ENCODE measurements at regions of chr15 and their contacts with region 1.

Region 1: DNA sequence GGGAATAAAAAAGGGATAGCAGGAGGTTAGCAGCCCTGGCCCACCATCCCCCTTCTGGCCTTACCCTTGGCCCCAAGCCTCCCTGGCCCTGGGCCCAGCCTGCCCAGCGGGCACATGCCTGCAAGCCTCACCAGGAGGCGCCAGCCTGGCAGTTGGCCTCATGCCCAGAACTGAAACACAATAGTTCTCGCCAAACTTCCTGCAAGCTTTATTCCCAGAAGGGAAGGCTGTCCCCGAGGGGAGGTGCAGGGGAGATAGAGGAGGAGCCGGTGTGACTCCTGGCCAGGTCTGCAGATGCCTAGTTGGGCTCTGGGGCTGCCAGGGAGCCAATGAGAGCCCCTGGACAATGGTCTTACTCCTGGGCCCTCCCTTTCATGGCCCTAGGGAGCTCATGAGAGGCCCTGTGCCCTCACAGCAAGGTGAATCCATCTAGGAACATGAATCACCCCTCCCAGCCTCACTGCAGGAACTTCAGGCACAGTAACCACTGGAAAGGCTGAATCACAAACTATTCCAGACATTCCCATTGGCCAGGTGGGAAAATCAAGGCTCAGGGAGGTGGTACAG is 4.0 kb downstream of the CCDC33 start:
- DNase-seq: no peak
- H3K4me3 ChIP-seq: no peak overlapping the region
- H3K27ac ChIP-seq: no peak overlapping the region
- H3K4me1 ChIP-seq: peaks cover 0 to 26% (median 16%) of the 10 kb centered on the region in 4 experiments; a peak in 6 of 7 replicates
- H3K27me3 ChIP-seq: peaks cover 0 to 9% (median 2%) of the 10 kb centered on the region in 4 experiments; a peak in 4 of 7 replicates
- CTCF ChIP-seq: peak; percentile 28 to 47 (median 40)
- EP300 ChIP-seq: no peak
- POLR2A ChIP-seq: no peak
- RAD21 ChIP-seq: peak; percentile 31 to 51; a peak in 3 of 4 replicates

Region 2: GRCh38 chr15:74251131-74251811 is 11.2 kb after region 1 on chr15:
- CTCF ChIA-PET with region 1: interaction called, 10 read pairs
- POLR2A ChIA-PET with region 1: no interaction called
- DNase-seq: no peak
- H3K4me3 ChIP-seq: no peak overlapping the region
- H3K27ac ChIP-seq: no peak overlapping the region
- H3K4me1 ChIP-seq: peaks cover 3 to 6% (median 5%) of the 10 kb centered on the region in 4 experiments
- H3K27me3 ChIP-seq: no peaks in the 10 kb centered on the region; a peak in 3 of 7 replicates
- CTCF ChIP-seq: no peak
- EP300 ChIP-seq: no peak
- POLR2A ChIP-seq: no peak
- RAD21 ChIP-seq: no peak